Body of pancreas (tissue), 4 donors: ENCODE measurements at regions of chr16 and their contacts with region 1.

Region 1: DNA sequence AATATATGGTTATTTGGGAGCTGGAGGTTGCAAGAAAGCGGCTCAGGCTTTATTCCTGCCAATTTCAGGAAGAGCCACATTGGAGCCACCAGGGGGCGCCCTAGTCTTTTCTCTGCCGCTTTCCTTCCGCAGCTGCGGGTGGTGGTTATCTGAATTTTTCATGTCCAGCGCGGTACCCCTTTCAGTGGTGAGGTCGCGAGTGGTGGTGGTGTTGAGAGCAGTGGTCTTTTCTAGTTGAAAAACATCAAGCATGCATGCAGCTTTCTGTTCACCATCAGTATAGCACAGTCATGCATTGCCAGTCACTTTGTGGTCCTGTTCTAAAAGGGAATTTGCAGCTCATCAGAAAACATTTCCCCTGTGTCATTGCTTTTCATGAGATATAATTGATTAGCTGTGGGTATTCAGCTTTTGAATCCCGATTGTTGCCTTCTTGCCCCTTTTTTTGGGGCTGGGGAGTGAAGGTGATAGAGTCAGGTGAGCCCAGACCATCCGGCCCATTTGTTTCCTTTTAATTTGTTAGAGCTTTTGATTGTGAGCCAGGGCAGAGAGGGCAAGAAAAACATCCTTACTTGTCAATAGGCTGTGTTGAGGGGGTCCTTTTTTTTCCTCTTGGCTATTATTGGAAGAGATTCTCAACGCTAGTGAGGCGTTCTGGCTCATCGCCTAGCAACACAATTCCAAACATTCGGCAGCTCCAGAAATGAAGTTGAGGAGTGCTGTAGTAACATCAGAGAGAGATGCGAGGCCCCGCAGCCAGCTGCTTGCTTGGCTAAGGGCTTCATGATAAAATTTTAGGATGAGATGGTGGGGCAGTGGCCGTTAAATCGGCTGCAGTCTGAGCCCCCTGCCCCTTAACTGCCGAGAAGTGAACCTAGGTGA is 119.0 kb downstream of the SNX29 start:
- DNase-seq: peak; percentile 60 to 73 (median 68)
- ATAC-seq: no peak
- H3K4me3 ChIP-seq: no peak overlapping the region
- H3K27ac ChIP-seq: no peak overlapping the region
- H3K4me1 ChIP-seq: peaks cover 5% of the 10 kb centered on the region
- H3K27me3 ChIP-seq: no peaks in the 10 kb centered on the region
- CTCF ChIP-seq: peak; percentile 69 to 89 (median 72)
- POLR2A ChIP-seq: no peak

Region 2: DNA sequence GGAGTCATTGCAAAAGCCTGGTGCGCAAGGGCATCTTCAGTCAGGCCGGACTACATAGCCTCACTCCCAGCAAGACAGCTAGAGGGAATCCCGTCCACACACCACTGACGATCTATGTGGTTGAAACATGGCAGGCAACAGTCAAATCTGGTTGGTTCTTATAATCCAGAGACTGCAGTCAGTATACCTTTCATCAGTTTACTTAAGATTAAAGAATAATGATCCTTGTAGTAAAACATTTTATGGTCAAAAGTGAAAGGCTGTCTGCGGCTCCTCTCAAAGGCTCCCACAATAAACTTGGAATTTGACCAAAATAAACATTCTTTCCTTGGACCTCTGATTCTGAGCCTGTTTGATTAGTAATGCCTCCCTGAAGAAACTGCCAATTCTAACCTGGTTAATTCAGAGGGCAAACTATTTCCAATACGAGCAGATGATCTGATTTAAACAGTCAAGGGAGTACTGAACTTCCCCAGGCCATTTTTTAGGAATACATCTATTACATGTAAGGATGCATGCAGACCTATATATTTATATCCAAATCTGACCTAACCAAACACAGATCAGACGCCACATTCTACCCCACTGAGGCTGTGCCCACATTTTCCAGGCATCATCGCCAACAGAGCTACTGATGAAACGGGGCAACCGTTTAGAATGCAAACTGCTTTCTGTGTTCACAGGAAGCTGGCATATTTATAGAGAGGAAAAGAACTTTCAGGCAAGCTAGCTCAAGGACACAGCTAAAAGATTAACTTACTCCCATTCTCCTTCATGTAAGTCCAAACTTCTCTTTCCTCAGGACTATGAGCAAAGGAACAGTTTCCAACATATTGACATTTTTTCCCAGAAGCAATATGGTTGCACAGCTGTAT is 337.6 kb before region 1 on chr16:
- intact Hi-C with region 1: no loop called
- DNase-seq: no peak
- ATAC-seq: peak; percentile 48
- H3K4me3 ChIP-seq: no peak overlapping the region
- H3K27ac ChIP-seq: peak overlapping the region; percentile 66 to 86 (median 74)
- H3K4me1 ChIP-seq: peaks cover 62% of the 10 kb centered on the region
- H3K27me3 ChIP-seq: no peaks in the 10 kb centered on the region
- CTCF ChIP-seq: no peak
- POLR2A ChIP-seq: no peak

Region 3: GRCh38 chr16:12257926-12258561 is 162.5 kb after region 1 on chr16:
- intact Hi-C with region 1: loop called (anchors 10 kb)
- DNase-seq: peak in 3 of 4 donors; percentile 25 to 33 (median 31)
- ATAC-seq: no peak
- H3K4me3 ChIP-seq: no peak overlapping the region
- H3K27ac ChIP-seq: no peak overlapping the region
- H3K4me1 ChIP-seq: peaks cover 11% of the 10 kb centered on the region
- H3K27me3 ChIP-seq: no peaks in the 10 kb centered on the region
- CTCF ChIP-seq: peak in 1 of 7 experiments; percentile 26
- POLR2A ChIP-seq: no peak